A673 (cell line): ENCODE measurements at regions of chr12 and their contacts with region 1.

Region 1: DNA sequence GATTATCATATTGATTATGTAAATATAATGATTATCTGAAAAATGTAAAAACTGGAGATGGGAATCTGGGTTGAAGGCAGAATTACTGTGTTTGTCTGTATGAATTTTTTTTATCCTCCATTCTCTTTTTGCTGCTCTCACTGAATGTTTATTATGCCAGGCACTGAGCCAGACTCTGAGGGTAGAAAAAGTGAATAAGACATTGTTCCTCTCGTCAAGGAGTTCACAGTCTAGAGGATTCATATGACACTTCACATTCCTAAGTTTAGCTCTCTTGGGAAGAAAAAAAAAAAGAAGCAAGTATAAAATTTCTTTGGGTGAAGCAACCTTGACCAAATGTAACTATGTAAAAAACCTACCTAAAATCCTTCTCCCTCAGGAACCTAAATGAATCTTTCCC is 120.9 kb upstream of the LMO3 start:
- DNase-seq: peak; percentile 92
- H3K4me3 ChIP-seq: no peak overlapping the region
- H3K27ac ChIP-seq: peak overlapping the region; percentile 97
- H3K4me1 ChIP-seq: peaks cover 26% of the 10 kb centered on the region
- H3K27me3 ChIP-seq: no peaks in the 10 kb centered on the region
- CTCF ChIP-seq: no peak

Region 2: DNA sequence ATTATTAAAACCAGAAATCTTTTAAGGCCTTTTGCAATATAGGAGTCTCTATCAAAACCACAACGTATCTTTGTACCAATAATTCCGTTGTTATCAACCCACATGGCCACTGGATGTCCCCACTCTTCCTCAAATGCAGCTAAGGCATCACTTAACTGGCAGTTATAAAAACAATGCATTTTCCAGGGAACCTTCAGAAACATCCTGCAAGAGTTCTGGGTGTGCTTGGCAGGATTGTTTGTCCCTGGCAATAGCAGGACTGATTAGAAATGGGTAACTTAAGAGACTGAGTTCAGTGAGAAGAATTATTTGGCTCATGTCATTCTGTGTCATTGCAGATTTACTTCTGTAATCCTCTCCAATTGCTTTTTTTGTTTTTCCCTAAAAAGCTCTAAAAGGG is 561.4 kb before region 1 on chr12:
- CTCF ChIA-PET with region 1: no interaction called
- POLR2A ChIA-PET with region 1: no interaction called
- intact Hi-C with region 1: loop called (anchors 10 kb)
- DNase-seq: peak; percentile 82
- H3K4me3 ChIP-seq: no peak overlapping the region
- H3K27ac ChIP-seq: no peak overlapping the region
- H3K4me1 ChIP-seq: peaks cover 20% of the 10 kb centered on the region
- H3K27me3 ChIP-seq: peaks cover 13% of the 10 kb centered on the region
- CTCF ChIP-seq: peak; percentile 77

Region 3: GRCh38 chr12:16344269-16344668 is 382.6 kb before region 1 on chr12:
- CTCF ChIA-PET with region 1: no interaction called
- POLR2A ChIA-PET with region 1: no interaction called
- intact Hi-C with region 1: no loop called
- DNase-seq: no peak
- H3K4me3 ChIP-seq: no peak overlapping the region
- H3K27ac ChIP-seq: no peak overlapping the region
- H3K4me1 ChIP-seq: no peaks in the 10 kb centered on the region
- H3K27me3 ChIP-seq: no peaks in the 10 kb centered on the region
- CTCF ChIP-seq: no peak

Region 4: GRCh38 chr12:17215759-17216570 is 489.1 kb after region 1 on chr12:
- CTCF ChIA-PET with region 1: no interaction called
- POLR2A ChIA-PET with region 1: interaction called, 13 read pairs
- intact Hi-C with region 1: no loop called
- DNase-seq: peak; percentile 85
- H3K4me3 ChIP-seq: peak overlapping the region; percentile 19
- H3K27ac ChIP-seq: peak overlapping the region; percentile 51
- H3K4me1 ChIP-seq: peaks cover 22% of the 10 kb centered on the region
- H3K27me3 ChIP-seq: no peaks in the 10 kb centered on the region
- CTCF ChIP-seq: peak; percentile 59

Region 5: DNA sequence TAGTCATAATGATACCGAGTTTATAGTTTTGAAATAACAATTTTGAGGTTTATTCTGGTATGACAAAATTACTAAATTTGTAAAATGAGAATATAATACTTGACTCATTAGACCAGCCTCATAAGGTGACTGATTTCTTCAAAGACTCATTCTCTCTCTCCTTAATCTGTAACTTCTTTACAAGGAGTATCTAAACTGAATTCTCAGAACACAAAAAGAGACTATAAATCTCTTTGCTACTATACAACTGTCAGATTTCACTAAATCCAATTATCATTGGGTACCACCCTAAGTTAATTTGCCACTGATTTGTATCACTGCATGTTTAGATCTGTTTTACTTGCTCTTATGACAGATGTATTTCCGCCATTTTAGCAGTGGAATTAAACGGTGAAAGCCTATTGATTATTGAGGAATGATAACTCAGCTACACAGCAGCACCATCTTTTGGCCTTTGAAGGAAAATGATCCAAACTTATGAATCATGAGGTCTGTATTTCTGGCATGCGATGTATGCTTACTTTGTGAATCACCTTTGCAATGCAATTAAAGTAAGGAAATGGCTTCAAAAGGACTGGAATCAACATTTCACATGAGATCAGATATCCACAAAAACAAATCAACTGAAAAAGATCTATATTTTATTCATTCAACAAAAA is 1202.0 kb after region 1 on chr12:
- CTCF ChIA-PET with region 1: no interaction called
- POLR2A ChIA-PET with region 1: no interaction called
- intact Hi-C with region 1: loop called (anchors 5 kb)
- DNase-seq: peak; percentile 84
- H3K4me3 ChIP-seq: no peak overlapping the region
- H3K27ac ChIP-seq: no peak overlapping the region
- H3K4me1 ChIP-seq: peaks cover 24% of the 10 kb centered on the region
- H3K27me3 ChIP-seq: no peaks in the 10 kb centered on the region
- CTCF ChIP-seq: peak; percentile 53